ENCODE measurements at regions of chr14 and their contacts with region 1.

Region 1: GRCh38 chr14:100132161-100132902 is 27.1 kb downstream of the DEGS2 start:
- DNase-seq: no peak
- H3K4me3 Mint-ChIP-seq: no peak overlapping the region
- H3K27ac Mint-ChIP-seq: no peak overlapping the region
- H3K4me1 Mint-ChIP-seq: peaks cover 33% of the 10 kb centered on the region
- H3K27me3 Mint-ChIP-seq: no peaks in the 10 kb centered on the region
- CTCF ChIP-seq: no peak

Region 2: DNA sequence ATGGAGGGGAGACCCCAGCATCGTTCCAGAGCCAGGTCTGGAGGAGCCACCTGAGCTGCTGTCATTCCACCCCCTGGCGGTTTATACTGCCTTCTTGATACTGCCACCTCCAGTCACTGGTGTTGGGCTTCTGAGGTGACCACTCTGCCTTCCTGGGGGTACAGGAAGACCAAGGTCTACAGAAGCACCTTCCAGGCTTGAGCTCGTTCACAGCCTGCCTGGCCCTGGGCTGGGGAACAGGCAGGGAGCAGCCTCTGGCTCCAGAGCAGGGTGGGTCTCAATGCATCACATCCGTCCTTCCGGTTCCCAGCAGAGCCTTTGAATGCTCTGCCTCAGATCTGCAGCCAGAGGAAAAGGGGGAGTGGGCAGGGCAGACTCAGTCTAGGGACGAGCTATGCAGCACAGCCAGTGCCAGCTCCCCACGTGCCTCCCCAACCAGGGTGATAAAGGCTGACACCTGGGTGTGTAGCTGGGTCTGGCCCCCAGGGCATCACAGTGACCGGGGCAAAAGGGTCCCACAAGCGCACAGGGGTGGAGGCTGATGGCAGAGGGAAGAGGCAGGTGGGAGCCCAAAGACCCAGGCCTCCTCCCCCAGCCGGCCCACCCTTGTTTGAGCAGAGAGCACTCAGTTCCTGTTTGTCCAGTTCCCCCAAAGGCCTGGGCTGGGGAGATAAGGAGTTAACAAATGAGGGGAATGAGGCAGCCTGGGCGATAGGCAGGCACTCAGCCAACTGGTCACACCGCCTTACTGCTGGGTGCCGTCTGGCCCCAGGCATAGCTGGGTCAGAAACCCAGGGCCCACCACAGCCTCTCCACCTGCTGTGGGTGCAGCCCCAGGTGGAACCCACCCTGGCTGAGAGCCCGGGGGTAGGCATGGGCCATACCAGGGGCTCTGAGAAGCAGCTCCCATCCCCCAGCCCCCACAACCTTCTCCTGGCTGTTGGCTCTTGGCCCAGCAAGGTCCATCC is 10.0 kb after region 1 on chr14:
- CTCF ChIA-PET with region 1: interaction called, 11 read pairs
- intact Hi-C with region 1: no loop called
- DNase-seq: peak; percentile 67
- H3K4me3 Mint-ChIP-seq: peak overlapping the region; percentile 19
- H3K27ac Mint-ChIP-seq: no peak overlapping the region
- H3K4me1 Mint-ChIP-seq: peaks cover 29% of the 10 kb centered on the region
- H3K27me3 Mint-ChIP-seq: no peaks in the 10 kb centered on the region
- CTCF ChIP-seq: no peak